ENCODE measurements at regions of chr11 and their contacts with region 1.

Region 1: DNA sequence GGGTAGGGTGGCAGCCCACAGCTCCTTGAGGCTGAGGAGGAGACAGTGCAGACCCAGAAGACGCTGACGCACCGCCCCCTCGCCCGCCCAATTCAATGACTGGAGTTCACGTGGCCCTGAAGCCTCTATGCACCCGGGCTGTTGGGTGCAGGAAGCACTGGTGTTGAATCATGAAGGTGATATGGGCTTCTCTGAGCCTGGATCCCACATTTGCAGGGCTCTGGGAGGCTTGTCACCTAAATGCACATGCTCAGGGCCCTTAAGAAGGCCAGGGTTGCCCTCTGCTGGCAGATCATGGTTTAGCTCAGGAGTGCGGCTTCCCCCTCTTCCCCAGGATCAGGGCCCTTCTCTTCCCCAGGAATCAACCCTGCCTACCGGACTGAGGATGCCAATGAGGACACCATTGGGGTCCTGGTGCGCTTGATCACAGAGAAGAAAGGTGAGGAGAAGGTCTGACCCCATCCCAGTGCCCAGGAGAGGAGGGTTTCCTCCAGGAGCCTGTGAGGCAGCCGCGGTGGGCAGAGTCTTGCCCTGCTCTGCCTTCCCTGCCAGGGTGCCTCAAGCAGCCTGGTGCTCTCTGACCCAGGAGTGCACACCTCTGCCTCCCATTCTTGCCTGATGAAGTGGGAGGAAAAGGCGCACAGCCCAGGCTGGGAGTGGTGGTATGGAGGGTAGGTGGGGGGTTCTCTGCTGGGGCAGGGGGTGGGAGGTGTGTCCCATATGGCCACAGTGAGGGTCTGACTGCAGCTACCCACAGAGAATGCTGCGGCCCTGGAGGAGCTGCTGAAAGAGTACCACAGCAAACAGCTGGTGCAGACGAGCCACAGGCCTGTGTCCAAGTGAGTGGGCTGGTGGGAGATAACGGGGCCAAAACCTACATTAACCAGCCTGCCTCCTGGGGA is 17.5 kb downstream of the RELT start:
- DNase-seq: peak; percentile 79
- H3K4me3 ChIP-seq: no peak overlapping the region
- H3K27ac ChIP-seq: no peak overlapping the region
- H3K4me1 ChIP-seq: peaks cover 13% of the 10 kb centered on the region
- CTCF ChIP-seq: peak; percentile 88

Region 2: GRCh38 chr11:72871119-72871518 is 522.6 kb before region 1 on chr11:
- CTCF ChIA-PET with region 1: no interaction called
- POLR2A ChIA-PET with region 1: no interaction called
- intact Hi-C with region 1: no loop called
- DNase-seq: no peak
- H3K4me3 ChIP-seq: no peak overlapping the region
- H3K27ac ChIP-seq: no peak overlapping the region
- H3K4me1 ChIP-seq: no peaks in the 10 kb centered on the region
- CTCF ChIP-seq: no peak

Region 3: GRCh38 chr11:73335204-73335923 is 58.4 kb before region 1 on chr11:
- CTCF ChIA-PET with region 1: no interaction called
- POLR2A ChIA-PET with region 1: no interaction called
- intact Hi-C with region 1: no loop called
- DNase-seq: peak; percentile 77
- H3K4me3 ChIP-seq: no peak overlapping the region
- H3K27ac ChIP-seq: no peak overlapping the region
- H3K4me1 ChIP-seq: peaks cover 13% of the 10 kb centered on the region
- CTCF ChIP-seq: peak; percentile 99

Region 4: DNA sequence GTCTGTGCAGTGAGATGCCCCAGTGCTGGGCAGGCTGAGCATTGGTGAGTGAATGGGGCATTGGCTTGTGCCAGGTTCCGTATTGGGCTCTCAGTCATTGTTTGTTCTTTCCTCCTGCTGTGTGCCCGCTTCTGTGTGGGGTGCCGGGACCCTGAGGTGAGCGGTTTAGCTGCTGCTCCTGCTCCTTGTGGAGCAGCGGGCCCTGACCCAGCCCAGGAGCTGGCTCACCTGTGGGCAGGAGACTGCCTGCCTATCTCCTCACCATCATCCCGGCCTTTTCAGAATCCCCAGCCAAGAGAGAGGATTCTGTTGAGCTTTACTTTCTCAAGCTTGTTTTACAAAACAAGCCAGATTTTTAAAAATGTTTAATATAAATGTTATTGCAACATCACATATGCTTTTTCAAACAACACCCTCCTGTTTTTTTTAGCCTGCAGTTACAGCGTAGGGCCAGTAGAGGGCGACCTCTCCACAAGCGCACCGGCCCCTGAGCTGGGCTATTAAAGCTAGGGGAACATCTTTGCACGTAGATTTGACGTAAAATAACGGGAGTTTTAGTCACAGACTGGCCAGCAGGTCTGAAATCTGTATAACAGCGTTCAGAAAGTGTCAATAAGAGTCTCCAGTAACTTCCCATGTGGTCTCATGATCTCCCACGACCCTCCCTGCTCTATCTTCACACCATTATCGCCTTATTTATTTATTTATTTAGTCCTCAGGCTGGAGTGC is 42.7 kb before region 1 on chr11:
- CTCF ChIA-PET with region 1: interaction called, 10 read pairs
- POLR2A ChIA-PET with region 1: no interaction called
- intact Hi-C with region 1: loop called (anchors 1 kb)
- DNase-seq: peak; percentile 78
- H3K4me3 ChIP-seq: no peak overlapping the region
- H3K27ac ChIP-seq: no peak overlapping the region
- H3K4me1 ChIP-seq: no peaks in the 10 kb centered on the region
- CTCF ChIP-seq: peak; percentile 99

Region 5: DNA sequence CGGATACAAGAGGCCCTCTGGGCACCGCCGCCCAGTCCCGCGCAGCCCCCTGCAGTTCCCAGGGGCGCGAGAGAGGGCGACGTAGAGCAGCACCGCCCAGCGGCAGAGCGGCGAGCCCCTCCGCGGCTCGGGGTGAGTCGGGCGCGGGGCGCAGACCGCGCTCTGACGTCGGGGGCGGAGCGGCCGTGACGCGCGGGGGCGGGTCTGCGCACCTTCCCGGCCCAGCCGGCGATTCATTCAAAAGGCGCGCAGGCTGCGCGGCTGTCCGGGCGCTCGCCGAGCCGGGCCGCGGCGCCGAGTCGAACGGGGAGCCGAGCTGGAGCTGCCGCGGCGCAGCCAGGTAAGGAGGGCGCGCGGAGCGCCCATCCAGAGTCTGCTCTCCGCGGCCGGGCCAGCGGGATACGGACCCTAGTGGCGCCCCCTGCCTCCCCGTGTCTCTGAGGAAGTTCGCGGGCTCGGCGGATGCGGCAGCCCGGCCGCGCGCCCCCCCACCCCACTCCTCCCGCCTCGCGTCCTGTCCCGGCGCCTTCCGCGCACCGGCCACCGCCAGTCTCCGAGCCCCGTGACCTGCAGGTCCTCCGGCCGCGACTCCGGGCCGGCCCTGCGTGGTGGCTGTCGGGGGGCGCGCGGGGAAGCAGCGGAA is 17.4 kb before region 1 on chr11 and contains the start of gene RELT:
- CTCF ChIA-PET with region 1: no interaction called
- POLR2A ChIA-PET with region 1: interaction called, 3 read pairs
- intact Hi-C with region 1: loop called (anchors 2 kb)
- DNase-seq: peak; percentile 95
- H3K4me3 ChIP-seq: peak within 1 kb of the TSS; percentile 98
- H3K27ac ChIP-seq: peak within 1 kb of the TSS; percentile 63
- H3K4me1 ChIP-seq: peaks cover 62% of the 10 kb centered on the region
- CTCF ChIP-seq: peak; percentile 88
- total RNA-seq, gene RELT: 16.6 and 21.5 TPM in 2 replicates